AG04450 (cell line): ENCODE measurements at regions of chr12 and their contacts with region 1.

Region 1: DNA sequence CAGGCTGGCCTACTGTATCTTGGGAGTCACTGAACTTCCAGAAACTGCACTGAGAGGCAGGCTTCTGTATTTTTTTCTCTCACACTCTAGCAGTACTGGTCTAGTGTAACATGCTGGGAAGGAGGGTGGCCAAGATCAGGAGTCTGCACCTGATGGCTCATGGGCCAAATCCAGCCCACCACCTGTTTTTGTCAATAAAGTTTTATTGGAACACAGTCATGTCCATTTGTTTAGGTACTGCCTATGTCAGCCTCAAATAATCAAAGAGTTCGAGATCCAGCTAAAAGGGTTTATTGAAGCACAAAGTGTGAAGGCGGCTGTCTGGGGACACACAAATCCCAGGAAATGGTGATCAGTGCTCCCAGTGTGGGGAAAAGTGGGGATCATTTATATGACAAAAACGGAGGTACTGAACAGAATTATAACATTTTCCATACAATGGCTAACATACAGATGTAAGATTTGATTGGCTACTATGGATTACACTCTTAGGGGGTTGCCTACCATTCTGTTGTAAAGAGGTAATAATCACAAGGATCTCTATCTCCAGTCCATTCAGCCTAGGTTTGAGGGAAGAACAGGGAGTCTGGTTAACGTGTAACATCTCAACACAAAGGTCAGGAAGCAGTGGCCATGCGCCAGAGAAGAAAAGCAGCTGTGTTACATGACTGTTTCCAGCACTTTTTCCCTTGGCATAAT is 12.9 kb downstream of the USP30 start:
- DNase-seq: no peak
- H3K4me3 ChIP-seq: no peak overlapping the region
- H3K27ac ChIP-seq: no peak overlapping the region
- H3K27me3 ChIP-seq: no peaks in the 10 kb centered on the region
- CTCF ChIP-seq: no peak

Region 2: GRCh38 chr12:108744021-108744897 is 321.0 kb before region 1 on chr12:
- CTCF ChIA-PET with region 1: no interaction called
- POLR2A ChIA-PET with region 1: no interaction called
- DNase-seq: no peak
- H3K4me3 ChIP-seq: no peak overlapping the region
- H3K27ac ChIP-seq: no peak overlapping the region
- H3K27me3 ChIP-seq: no peaks in the 10 kb centered on the region
- CTCF ChIP-seq: no peak

Region 3: GRCh38 chr12:108939594-108939993 is 125.7 kb before region 1 on chr12:
- CTCF ChIA-PET with region 1: no interaction called
- POLR2A ChIA-PET with region 1: interaction called, 14 read pairs
- DNase-seq: no peak
- H3K4me3 ChIP-seq: no peak overlapping the region
- H3K27ac ChIP-seq: no peak overlapping the region
- H3K27me3 ChIP-seq: peaks cover 12% of the 10 kb centered on the region
- CTCF ChIP-seq: no peak